Mammary epithelial cell (primary cell): ENCODE measurements at regions of chr9 and their contacts with region 1.

Region 1: GRCh38 chr9:133103183-133103986 is 17.7 kb downstream of the RALGDS start:
- DNase-seq: no peak
- H3K4me3 ChIP-seq: no peak overlapping the region
- H3K27ac ChIP-seq: no peak overlapping the region
- H3K4me1 ChIP-seq: no peaks in the 10 kb centered on the region
- H3K27me3 ChIP-seq: no peaks in the 10 kb centered on the region
- CTCF ChIP-seq: peak; percentile 93 to 94

Region 2: DNA sequence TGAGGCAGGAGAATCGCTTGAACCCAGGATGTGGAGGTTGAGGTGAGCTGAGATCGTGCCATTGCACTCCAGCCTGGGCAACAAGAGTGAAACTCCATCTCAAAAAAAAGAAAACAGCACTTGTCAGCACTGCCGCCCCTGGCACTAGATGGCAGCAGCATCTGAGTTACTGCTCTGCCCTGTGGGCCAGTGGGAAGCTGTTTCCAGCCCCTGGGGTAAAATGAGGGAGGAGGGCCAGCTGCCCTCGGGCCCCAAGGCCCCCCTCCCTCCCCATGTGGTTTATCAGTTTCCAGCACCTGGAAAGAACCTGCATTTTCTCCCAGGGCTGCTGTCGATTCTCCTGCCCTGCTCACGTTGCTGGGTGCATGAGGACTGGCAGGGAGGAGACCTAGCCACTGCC is 54.8 kb before region 1 on chr9:
- CTCF ChIA-PET with region 1: no interaction called
- dilution Hi-C with region 1: no loop called
- in situ Hi-C with region 1: no loop called
- intact Hi-C with region 1: loop called (anchors 1 kb)
- DNase-seq: no peak
- H3K4me3 ChIP-seq: no peak overlapping the region
- H3K27ac ChIP-seq: no peak overlapping the region
- H3K4me1 ChIP-seq: no peaks in the 10 kb centered on the region
- H3K27me3 ChIP-seq: no peaks in the 10 kb centered on the region
- CTCF ChIP-seq: peak; percentile 32 to 64

Region 3: DNA sequence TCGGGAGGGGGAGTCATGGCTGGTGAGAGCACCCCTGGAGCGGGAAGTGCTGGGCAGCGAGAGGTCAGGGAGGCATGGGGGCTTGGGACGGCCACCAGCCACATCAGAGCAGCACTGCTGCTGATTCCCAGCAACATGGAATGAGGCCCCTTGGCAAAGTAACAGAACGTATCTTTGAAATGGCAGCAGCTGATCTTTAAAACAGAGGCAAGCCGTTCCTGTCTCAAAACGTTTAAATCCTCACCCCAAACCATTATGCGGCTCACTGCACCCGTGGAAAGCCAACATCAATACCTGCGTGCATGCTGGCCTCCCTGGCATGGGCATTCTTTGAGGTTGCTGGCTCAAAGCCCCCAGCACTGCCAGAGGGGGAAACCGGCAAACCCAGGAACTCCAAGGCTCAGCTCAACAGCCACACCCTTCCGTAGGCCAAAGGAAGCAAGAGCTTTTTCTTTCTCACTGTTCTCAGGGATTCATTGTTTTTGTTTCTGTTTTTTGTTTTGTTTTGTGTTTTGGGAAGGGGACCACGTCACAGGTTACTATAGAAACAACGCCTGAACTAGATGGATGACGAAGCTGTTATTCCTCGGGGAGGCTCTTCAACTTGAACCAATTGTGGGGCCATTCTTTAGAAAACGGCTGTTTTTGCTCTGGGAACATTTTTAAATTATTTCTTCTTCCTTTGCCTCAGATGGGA is 133.8 kb after region 1 on chr9:
- CTCF ChIA-PET with region 1: no interaction called
- dilution Hi-C with region 1: no loop called
- in situ Hi-C with region 1: no loop called
- intact Hi-C with region 1: no loop called
- DNase-seq: no peak
- H3K4me3 ChIP-seq: no peak overlapping the region
- H3K27ac ChIP-seq: no peak overlapping the region
- H3K4me1 ChIP-seq: no peaks in the 10 kb centered on the region
- H3K27me3 ChIP-seq: no peaks in the 10 kb centered on the region
- CTCF ChIP-seq: no peak